Uterus (tissue), 4 donors: ENCODE measurements at regions of chr10 and their contacts with region 1.

Region 1: DNA sequence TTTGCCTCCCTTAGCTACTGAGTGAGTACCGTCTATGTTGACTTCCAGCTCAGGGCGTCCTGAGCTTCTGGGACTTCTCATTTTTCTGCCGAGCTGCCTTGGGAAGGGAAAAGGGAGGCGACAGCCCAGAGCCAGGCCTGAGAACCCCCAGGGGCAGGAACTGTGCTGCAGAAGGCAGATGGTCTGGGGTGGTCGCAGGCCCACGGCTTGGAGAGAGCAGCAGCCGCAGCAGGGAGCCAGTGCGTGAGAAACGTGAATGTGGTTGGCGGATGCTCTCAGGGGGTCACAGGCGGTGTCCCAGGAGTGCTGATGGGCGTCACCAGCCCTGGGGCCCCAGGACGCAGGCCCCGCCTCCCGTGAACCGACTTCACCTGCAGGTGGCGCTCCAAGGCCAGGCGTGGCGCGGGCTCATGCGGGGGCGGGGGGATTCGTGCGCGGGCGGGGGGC is 9.2 kb upstream of the PWWP2B start:
- DNase-seq: peak; percentile 68 to 76
- H3K4me3 ChIP-seq: no peak overlapping the region
- H3K27ac ChIP-seq: peak overlapping the region; percentile 70 to 73
- H3K4me1 ChIP-seq: no peaks in the 10 kb centered on the region
- H3K27me3 ChIP-seq: no peaks in the 10 kb centered on the region
- CTCF ChIP-seq: peak; percentile 66 to 82 (median 78)
- POLR2A ChIP-seq: peak in 1 of 2 donors; percentile 17

Region 2: DNA sequence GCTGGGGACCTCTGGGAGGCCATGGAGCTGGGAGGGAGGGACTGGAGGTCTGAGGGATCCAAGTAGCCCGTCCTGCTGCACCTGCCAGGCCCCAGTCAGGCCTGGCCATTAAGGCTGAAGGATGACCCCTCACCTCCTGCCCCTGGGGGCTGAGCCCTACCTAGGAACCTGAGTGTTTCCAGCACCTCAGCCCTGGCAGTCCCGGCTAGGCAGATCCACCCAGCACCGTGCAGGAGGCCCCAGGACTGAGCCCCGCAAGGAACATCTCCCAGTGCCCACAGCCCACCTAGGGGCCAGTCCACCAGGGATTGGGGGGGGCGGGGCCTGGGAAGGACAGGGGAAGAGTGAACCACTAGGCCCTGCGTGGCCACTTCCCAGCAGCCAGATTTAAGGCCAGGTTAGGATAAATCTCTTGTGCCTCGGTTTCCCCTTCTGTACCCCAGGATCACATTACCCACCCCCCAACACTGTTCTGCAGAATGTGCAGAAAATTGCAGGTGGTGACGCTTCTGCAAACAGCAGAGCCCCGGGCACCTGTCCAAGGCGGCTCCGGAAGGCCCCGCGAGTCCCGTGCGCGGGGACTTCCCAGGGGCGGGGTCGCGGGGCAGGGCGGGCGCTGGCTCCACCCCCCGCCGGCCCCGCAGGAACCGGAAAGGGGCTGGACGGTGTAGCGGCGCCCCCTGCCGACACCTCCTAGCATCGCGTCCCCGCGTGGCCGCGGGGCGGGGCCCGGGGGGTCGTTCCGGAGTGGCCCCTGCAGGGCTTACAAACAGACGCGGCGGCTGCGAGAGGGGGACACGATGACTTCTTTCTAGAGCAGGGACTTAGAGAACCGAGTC is 65.1 kb after region 1 on chr10:
- intact Hi-C with region 1: loop called (anchors 2 kb)
- DNase-seq: peak; percentile 82 to 85
- H3K4me3 ChIP-seq: no peak overlapping the region
- H3K27ac ChIP-seq: peak overlapping the region in 1 of 2 donors; percentile 35
- H3K4me1 ChIP-seq: peaks cover 0 to 11% of the 10 kb centered on the region in 2 donors
- H3K27me3 ChIP-seq: no peaks in the 10 kb centered on the region
- CTCF ChIP-seq: peak; percentile 95 to 99 (median 99)
- POLR2A ChIP-seq: no peak

Region 3: DNA sequence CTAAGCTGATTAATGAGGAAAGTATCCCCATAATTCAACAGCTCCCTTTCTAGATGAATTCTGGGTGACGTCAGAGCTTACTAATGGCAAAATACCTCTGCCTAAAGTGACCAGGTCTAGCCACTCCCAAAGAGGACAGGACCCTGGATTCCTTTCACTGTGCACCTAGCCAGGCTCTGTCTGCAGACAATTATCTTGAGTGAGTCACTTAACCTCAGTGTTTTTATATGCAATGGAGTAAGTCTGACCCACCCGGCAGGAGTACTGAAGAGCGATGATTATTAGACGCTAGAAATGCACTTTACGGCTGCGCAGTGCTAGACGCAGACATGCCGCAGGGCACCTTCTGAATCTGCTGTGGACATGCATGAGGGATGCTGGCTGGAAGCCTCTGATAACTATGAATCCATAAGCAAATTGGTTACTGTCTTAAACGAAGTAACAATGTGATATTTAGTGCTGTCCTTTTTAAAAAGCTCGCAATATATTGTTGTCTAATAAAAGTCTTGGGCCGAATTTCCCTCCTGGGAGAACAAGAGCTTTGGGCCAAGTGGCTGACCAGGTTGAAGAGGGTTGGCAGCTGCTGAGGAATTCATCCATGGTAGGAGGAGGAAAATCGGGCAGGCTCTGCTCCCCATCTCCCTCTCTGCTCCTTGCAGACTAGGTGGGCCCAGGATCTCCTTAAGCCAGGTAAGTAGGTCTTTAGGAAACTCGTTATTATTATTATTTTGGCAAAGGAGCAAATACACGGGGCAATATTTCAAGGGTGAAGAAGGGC is 145.2 kb after region 1 on chr10:
- intact Hi-C with region 1: no loop called
- DNase-seq: peak; percentile 12 to 14
- H3K4me3 ChIP-seq: no peak overlapping the region
- H3K27ac ChIP-seq: no peak overlapping the region
- H3K4me1 ChIP-seq: peaks cover 0 to 7% of the 10 kb centered on the region in 2 donors
- H3K27me3 ChIP-seq: no peaks in the 10 kb centered on the region
- CTCF ChIP-seq: no peak
- POLR2A ChIP-seq: no peak

Region 4: DNA sequence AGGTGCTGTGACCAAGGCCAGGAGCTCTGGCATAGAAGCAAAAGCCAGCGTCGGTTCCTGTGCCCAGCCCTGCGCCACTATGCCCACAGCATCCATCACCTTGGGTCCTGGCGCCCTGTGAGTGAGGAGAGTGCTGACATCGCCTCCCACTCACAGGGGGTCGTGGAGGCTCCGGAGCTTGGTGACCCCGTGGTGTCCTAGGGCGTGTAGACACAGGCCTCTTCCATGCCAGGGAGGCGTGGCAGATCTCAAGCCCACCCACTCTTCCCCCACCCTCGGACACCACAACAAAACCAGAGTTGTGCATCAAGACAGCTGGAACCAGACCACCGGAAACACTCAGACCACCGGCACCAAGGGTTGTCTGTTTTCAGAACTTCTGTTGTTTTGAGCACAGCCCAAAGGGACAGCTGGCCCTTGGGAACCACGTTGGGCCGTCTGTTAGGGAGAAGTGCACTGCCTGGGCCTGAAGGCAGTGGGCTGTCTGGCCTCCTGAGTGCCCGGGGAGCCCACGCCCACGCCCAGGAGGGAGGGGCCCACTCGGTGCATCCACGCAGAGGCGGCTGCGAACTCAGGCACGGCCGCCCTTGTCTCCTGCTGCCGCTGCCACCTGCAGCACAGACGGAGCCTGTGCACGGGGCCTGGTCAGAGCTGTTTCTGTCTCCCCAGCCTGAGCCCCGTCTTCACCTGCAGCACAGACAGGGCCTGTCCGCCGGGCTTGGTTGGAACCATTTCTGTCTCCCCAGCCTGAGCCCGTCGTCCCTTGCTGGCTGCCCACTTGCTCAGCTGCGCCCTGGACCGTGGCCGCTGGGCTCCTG is 256.1 kb after region 1 on chr10:
- intact Hi-C with region 1: loop called (anchors 10 kb)
- DNase-seq: peak; percentile 12 to 14
- H3K4me3 ChIP-seq: no peak overlapping the region
- H3K27ac ChIP-seq: no peak overlapping the region
- H3K4me1 ChIP-seq: peaks cover 0 to 3% of the 10 kb centered on the region in 2 donors
- H3K27me3 ChIP-seq: no peaks in the 10 kb centered on the region
- CTCF ChIP-seq: no peak
- POLR2A ChIP-seq: no peak